Esophagus muscularis mucosa (tissue), 4 donors: ENCODE measurements at regions of chr7 and their contacts with region 1.

Region 1: DNA sequence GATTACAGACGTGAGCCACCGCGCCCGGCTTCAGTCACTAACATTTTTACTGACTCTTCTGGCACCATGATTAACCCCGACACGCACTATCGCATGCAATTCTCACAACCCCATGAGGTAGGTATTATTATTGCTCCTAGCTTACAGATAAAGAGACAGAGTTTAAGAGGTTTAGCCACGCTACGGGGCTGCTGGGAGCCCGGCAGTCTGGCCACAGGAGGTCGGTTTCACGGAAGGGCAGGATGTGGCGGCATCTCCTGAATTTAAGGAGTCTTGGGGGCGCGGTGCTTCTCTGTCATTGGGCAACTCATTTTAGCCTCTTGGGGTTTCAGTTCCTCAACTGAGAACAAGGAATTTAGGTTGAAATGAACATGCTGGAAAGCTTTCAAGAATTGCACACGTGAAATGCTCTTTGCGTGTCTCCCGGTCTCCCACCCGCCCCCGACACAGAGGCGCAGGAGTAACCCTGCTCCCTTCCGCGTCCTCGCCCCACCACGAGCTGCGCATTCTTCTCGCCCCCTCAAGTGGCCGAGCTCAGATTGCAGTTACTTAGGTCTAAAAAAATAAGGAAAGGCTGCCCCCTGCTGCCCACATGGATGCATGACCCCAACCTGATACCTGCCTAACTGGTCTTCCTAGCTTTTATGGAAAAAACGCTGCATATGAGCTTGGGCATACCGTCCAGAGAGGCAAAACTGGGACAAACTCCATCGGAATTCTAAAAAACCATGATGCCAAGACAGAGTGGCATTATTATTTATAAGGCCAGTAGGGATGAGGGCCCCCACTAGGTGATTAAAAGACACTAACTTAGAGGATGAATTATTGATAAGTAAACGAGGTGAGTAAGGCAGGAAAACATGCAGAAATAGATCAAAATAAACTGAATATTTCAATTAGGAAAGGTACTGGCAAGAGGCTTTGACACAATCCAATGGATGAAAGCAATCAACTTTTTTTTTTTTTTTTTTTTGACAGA is 12.4 kb downstream of the PRSS2 start:
- DNase-seq: peak; percentile 94
- H3K4me3 ChIP-seq: peak overlapping the region; percentile 30 to 52 (median 32)
- H3K27ac ChIP-seq: no peak overlapping the region
- H3K4me1 ChIP-seq: peaks cover 0 to 7% (median 4%) of the 10 kb centered on the region in 4 donors
- H3K27me3 ChIP-seq: peaks cover 0 to 17% (median 0%) of the 10 kb centered on the region in 4 donors
- CTCF ChIP-seq: peak; percentile 91 to 95 (median 91)
- EP300 ChIP-seq: no peak
- POLR2A ChIP-seq: no peak

Region 2: GRCh38 chr7:142535123-142535779 is 248.0 kb before region 1 on chr7:
- intact Hi-C with region 1: loop called (anchors 10 kb)
- DNase-seq: peak; percentile 85
- H3K4me3 ChIP-seq: no peak overlapping the region
- H3K27ac ChIP-seq: no peak overlapping the region
- H3K4me1 ChIP-seq: no peaks in the 10 kb centered on the region
- H3K27me3 ChIP-seq: peaks cover 0 to 7% (median 0%) of the 10 kb centered on the region in 4 donors
- CTCF ChIP-seq: peak; percentile 38 to 53 (median 43)
- EP300 ChIP-seq: no peak
- POLR2A ChIP-seq: no peak

Region 3: DNA sequence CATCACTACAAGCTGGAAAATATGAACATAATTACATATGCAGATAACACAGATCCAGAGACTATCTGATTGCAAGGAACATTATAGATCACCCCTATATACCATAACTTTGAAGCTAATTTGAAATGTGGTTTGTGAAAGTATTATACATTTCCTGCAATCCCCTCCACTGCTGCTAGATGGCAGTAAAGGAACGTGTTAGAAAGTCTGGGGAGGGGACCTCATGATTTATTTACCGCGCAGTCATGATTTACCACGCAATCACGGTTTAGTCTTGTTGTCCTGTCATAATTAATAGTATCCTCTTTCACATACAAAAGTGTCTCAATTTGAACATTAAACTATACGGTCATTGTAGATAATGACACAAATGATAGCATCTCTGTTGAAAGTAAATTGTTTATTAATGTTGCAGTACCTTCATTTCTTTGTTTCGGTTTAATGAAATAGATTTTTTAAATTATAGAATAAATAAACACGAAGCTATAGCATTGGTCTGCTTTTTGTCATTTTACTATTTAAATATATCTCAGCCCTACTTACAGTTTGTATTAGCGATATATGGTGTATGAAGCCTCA is 179.3 kb before region 1 on chr7:
- intact Hi-C with region 1: loop called (anchors 5 kb)
- DNase-seq: no peak
- H3K4me3 ChIP-seq: no peak overlapping the region
- H3K27ac ChIP-seq: no peak overlapping the region
- H3K4me1 ChIP-seq: no peaks in the 10 kb centered on the region
- H3K27me3 ChIP-seq: peaks cover 0 to 34% (median 3%) of the 10 kb centered on the region in 4 donors
- CTCF ChIP-seq: peak; percentile 66 to 78 (median 69)
- EP300 ChIP-seq: no peak
- POLR2A ChIP-seq: no peak

Region 4: DNA sequence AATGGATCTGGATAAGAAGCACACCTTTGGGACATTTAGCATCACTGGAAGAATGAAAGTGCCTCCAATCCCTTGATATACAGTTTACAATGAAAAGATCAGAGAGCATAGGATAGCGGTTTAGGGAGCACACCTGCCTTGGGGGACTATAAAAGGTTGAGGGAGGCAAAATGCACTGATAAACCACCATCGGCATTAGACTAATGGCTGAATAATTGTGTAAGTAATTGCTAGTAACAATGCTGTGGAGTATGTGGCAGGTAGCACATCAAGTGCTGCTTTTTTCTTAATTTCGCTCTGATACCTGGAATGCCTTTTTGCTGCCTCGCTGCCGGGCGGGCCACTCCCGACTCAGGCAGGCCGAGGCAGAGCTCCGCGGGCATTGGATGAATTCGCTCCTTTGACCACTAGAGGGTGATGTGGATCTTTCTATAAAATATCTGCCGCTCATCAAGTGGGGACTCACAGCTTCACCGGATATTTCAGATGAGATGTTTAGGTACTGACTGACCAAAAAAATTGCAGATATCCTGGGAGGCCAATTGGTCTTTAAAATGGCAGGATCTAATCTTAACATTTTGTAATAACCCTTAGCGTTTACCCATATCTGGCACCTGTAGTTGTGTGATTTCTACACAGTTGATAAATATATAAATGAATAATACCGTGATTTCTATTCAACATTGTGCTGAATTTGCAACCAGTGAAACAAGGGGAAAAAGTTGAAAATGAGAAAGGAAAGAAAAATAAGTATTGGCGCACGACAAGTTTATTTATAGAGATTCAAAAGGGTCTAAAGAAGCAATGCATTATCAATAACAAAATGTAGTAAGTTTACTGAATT is 150.7 kb before region 1 on chr7:
- intact Hi-C with region 1: loop called (anchors 5 kb)
- DNase-seq: no peak
- H3K4me3 ChIP-seq: no peak overlapping the region
- H3K27ac ChIP-seq: no peak overlapping the region
- H3K4me1 ChIP-seq: peaks cover 0 to 4% (median 0%) of the 10 kb centered on the region in 4 donors
- H3K27me3 ChIP-seq: peaks cover 0 to 23% (median 0%) of the 10 kb centered on the region in 4 donors
- CTCF ChIP-seq: peak; percentile 49 to 77 (median 62)
- EP300 ChIP-seq: no peak
- POLR2A ChIP-seq: no peak